Esophagus muscularis mucosa (tissue), 4 donors: ENCODE measurements at regions of chr7 and their contacts with region 1.

Region 1: GRCh38 chr7:48109848-48110663 is 21.0 kb downstream of the UPP1 start:
- DNase-seq: peak; percentile 96
- H3K4me3 ChIP-seq: no peak overlapping the region
- H3K27ac ChIP-seq: no peak overlapping the region
- H3K4me1 ChIP-seq: no peaks in the 10 kb centered on the region
- H3K27me3 ChIP-seq: no peaks in the 10 kb centered on the region
- CTCF ChIP-seq: peak in 2 of 3 experiments; percentile 94 to 99
- EP300 ChIP-seq: no peak
- POLR2A ChIP-seq: no peak

Region 2: DNA sequence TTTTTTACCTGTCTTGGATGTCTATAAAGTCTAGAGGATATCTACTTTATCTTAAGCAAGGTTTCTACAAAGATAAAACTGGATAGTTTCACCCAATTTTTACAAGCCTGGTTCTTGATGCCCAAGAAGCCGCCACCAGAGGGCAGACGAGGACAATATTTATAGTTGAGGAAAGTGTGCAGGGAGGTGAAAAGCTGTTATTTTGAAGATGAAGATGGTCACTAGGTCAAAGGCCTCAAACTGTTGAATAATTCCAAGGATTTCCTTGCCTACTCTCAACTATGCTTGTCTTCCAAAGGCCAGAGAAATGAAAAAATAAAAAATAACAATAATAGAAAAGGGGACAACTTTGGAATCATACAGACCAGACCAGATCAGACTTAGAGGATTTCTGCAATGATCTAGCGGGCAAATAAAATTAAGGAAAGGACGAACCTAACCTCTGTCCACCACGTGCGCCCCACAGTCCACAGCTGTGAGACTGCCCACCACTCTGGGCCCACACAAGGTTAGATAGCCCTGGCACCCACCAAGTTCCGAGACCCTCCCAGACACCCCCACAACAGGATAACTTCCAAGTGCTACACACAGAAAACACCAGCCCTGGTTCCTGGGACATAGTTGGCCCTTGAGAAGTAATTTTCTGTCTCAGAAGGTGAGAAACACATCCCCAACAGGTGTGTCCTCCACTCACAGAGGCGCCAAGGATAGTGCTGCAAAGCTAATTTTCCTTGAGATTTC is 164.6 kb before region 1 on chr7:
- intact Hi-C with region 1: loop called (anchors 1 kb)
- DNase-seq: no peak
- H3K4me3 ChIP-seq: no peak overlapping the region
- H3K27ac ChIP-seq: peak overlapping the region in 3 of 4 donors; percentile 1 to 42 (median 9)
- H3K4me1 ChIP-seq: peaks cover 8 to 40% (median 18%) of the 10 kb centered on the region in 4 donors
- H3K27me3 ChIP-seq: no peaks in the 10 kb centered on the region
- CTCF ChIP-seq: peak; percentile 75 to 76 (median 76)
- EP300 ChIP-seq: no peak
- POLR2A ChIP-seq: no peak

Region 3: DNA sequence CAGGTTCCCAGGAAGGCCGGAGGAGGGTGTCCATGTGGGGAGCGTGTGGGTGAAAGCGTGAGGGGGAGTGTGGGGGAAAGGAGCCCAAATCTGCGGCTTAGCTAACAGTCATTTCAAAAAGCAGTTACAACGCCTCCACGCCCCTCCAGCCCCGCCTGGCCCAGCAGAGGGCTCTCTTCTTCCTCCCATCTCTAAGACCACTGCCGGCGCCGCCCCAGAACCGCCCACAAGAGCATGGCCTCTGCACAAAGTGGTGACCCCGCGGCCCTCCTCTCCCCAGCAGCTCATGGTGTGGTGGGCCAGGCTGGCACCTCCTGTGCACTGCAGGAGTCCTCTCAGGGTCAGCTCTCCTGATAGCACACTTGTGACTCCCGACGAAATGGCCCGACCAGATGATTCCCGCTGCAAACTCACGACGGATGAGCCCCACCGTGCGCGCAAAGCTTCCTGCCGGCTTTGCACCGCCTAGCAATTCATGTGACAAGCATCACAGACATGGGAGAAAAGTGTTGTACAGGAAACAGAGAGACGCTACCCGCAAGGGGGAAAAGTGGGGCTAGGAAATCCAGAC is 118.2 kb before region 1 on chr7:
- intact Hi-C with region 1: loop called (anchors 2 kb)
- DNase-seq: peak; percentile 98
- H3K4me3 ChIP-seq: peak overlapping the region; percentile 52 to 63 (median 56)
- H3K27ac ChIP-seq: peak overlapping the region; percentile 29 to 60 (median 44)
- H3K4me1 ChIP-seq: peaks cover 0 to 16% (median 9%) of the 10 kb centered on the region in 4 donors
- H3K27me3 ChIP-seq: no peaks in the 10 kb centered on the region
- CTCF ChIP-seq: peak; percentile 44 to 60 (median 55)
- EP300 ChIP-seq: no peak
- POLR2A ChIP-seq: no peak

Region 4: DNA sequence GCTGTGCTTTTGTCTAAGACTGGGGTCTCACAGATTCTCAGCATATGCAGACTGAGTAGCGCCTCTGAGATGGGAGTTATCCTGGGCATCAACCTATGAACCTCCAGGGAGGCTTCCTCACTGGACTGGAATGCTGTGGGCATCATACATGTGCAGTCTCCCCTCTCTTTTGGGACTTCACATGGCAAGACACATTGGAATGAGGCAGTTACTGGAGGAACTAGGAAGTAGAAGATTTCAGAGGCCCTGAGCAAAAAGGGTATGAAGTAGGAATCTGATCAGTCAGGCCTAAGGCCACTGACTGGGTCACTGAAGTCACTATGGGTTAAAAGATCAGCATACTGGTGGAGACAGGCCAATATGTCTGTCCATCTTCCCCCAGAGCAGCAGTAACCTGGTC is 94.7 kb before region 1 on chr7:
- intact Hi-C with region 1: no loop called
- DNase-seq: no peak
- H3K4me3 ChIP-seq: no peak overlapping the region
- H3K27ac ChIP-seq: no peak overlapping the region
- H3K4me1 ChIP-seq: peaks cover 0 to 5% (median 0%) of the 10 kb centered on the region in 4 donors
- H3K27me3 ChIP-seq: no peaks in the 10 kb centered on the region
- CTCF ChIP-seq: no peak
- EP300 ChIP-seq: no peak
- POLR2A ChIP-seq: no peak

Region 5: DNA sequence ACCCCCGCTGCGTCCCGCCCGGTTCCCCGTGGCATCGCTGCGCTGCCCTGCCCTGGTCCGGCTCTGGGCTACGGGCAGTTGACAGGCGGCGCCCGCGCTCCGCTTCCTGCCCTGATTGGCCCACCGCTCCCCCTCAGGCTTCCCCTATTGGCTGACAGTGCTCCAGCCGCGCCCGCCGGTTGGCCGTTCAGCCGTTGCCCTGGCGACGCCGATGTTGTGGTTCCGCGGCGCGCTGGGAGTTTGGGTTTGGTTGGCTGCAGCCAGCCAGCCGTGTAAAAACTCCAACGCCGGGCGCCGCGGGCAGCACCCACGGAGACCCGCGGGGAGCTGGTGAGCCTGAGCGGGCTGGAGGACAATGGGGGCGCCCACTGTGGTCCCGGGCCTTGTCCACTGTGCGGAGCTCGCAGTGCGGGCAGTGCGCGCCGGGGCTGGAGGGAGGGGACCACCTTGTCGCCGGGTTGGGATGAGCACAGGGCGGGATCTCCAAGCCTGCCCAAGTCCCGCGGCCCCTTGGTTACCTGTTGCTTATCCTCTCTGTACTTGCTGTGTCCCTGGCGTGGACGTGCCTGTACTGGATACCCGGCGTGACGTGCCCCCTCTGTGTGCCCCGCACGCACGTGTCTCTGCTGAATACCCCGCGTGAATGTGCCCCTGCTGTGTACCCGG is 74.6 kb before region 1 on chr7 and contains the start of gene C7orf57:
- intact Hi-C with region 1: loop called (anchors 5 kb)
- DNase-seq: peak; percentile 95
- H3K4me3 ChIP-seq: peak within 1 kb of the TSS; percentile 56 to 69 (median 58)
- H3K27ac ChIP-seq: no peak within 1 kb of the TSS
- H3K4me1 ChIP-seq: peaks cover 14 to 16% (median 15%) of the 10 kb centered on the region in 4 donors
- H3K27me3 ChIP-seq: peaks cover 0 to 34% (median 2%) of the 10 kb centered on the region in 4 donors
- CTCF ChIP-seq: peak in 2 of 3 experiments; percentile 24 to 25
- EP300 ChIP-seq: no peak
- POLR2A ChIP-seq: no peak
- total RNA-seq, gene C7orf57: not detected